Spleen (tissue), 13 donors: ENCODE measurements at regions of chr5 and their contacts with region 1.

Region 1: GRCh38 chr5:118791926-118792734 is 196.2 kb downstream of the DTWD2 start:
- DNase-seq: no peak
- H3K4me3 ChIP-seq: peak overlapping the region in 1 of 8 donors; percentile 17
- H3K27ac ChIP-seq: peak overlapping the region in 1 of 8 donors; percentile 6
- H3K4me1 ChIP-seq: peaks cover 0 to 8% (median 5%) of the 10 kb centered on the region in 6 donors
- H3K27me3 ChIP-seq: no peaks in the 10 kb centered on the region
- CTCF ChIP-seq: peak; percentile 21 to 82 (median 64)
- POLR2A ChIP-seq: no peak

Region 2: GRCh38 chr5:117454716-117455596 is 1337.2 kb before region 1 on chr5:
- intact Hi-C with region 1: loop called (anchors 5 kb)
- DNase-seq: peak; percentile 71
- H3K4me3 ChIP-seq: peak overlapping the region in 3 of 8 donors; percentile 13 to 59 (median 27)
- H3K27ac ChIP-seq: no peak overlapping the region
- H3K4me1 ChIP-seq: peaks cover 0 to 10% (median 6%) of the 10 kb centered on the region in 6 donors
- H3K27me3 ChIP-seq: peaks cover 0 to 16% (median 6%) of the 10 kb centered on the region in 7 donors
- CTCF ChIP-seq: peak; percentile 33 to 81 (median 72)
- POLR2A ChIP-seq: no peak

Region 3: DNA sequence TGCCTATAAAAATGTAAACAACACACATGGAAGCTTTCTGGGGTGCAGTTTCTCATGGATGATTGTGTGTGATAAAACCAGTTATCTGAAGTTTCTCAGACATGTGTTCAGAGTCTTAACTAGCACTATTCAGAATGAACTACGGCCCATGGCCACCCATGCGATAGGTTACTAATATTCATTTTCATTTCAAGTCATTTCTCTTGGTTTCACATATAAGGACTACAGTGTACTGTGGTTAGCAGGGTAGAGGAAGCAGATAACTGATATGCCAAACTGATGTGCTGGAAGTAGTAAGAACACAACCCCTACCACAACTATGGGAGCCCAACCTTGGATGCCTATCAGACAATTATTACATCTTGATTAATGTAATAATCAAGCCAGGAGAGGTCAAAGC is 175.8 kb before region 1 on chr5:
- intact Hi-C with region 1: no loop called
- DNase-seq: no peak
- H3K4me3 ChIP-seq: no peak overlapping the region
- H3K27ac ChIP-seq: no peak overlapping the region
- H3K4me1 ChIP-seq: no peaks in the 10 kb centered on the region
- H3K27me3 ChIP-seq: no peaks in the 10 kb centered on the region
- CTCF ChIP-seq: no peak
- POLR2A ChIP-seq: no peak

Region 4: DNA sequence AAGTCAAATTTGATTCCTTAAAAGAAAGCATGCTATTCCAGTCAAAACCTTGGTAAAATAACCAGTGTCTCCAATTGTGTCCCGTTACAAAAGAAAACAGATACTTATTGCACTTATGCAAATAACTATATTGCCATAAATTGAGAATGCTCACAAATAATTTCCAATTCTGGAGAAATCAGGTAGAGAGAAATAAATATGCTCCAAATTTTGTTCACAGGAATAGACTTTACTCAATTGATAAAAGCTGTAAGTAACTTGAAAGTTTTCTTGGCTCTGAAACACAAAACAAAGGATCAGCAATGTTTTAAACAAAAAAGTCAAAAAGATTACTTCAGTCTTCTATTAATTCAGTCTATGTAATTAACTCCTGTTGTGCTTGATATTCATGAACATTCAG is 204.0 kb after region 1 on chr5:
- intact Hi-C with region 1: no loop called
- DNase-seq: no peak
- H3K4me3 ChIP-seq: no peak overlapping the region
- H3K27ac ChIP-seq: no peak overlapping the region
- H3K4me1 ChIP-seq: no peaks in the 10 kb centered on the region
- H3K27me3 ChIP-seq: no peaks in the 10 kb centered on the region
- CTCF ChIP-seq: no peak
- POLR2A ChIP-seq: no peak